Common myeloid progenitor, CD34-positive (primary cell): ENCODE measurements at regions of chr2 and their contacts with region 1.

Region 1: GRCh38 chr2:136022396-136023146 is 37.1 kb upstream of the DARS1 start:
- DNase-seq: peak in 2 of 3 donors; percentile 72 to 73
- H3K4me3 ChIP-seq: no peak overlapping the region
- H3K27ac ChIP-seq: no peak overlapping the region
- H3K4me1 ChIP-seq: peaks cover 12 to 38% (median 27%) of the 10 kb centered on the region in 4 experiments
- H3K27me3 ChIP-seq: peaks cover 0 to 3% (median 0%) of the 10 kb centered on the region in 5 experiments

Region 2: DNA sequence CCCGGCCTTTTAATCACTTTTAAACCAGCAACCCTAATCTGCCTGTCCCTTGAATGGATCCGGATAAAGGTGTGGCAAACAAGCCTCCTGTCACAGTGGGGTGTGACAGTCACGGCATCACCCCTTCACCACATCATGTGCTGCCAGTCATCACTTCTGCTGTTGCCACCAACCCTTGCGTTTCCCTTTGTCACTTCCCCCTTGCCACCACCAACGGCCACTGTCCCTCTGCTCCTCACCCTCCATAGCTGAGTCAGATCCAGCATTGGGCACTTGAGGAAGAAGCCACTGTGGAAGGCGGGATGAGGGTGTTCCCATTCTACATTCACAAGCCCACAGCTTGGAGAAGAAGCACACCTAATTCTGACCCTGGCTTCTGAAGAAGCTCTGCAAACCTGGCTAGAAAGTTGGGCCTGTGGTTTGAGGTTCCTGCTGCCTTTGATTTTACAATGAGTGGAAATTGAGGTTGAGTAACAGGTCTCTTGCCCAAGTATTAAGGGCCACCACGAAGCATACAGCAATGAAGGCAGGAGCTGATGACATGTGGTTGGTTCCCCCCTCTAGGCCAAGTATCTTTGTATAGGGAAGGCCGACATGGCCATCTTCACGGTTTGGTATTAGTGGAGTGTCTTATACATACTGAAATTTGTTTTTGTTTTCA is 14.2 kb before region 1 on chr2:
- CTCF ChIA-PET with region 1: interaction called, 16 read pairs
- POLR2A ChIA-PET with region 1: interaction called, 8 read pairs
- DNase-seq: peak; percentile 97 to 100 (median 99)
- H3K4me3 ChIP-seq: peak overlapping the region in 1 of 7 experiments; percentile 28
- H3K27ac ChIP-seq: peak overlapping the region; percentile 78 to 92
- H3K4me1 ChIP-seq: peaks cover 34 to 62% (median 50%) of the 10 kb centered on the region in 4 experiments
- H3K27me3 ChIP-seq: no peaks in the 10 kb centered on the region